ENCODE measurements at regions of chr11 and their contacts with region 1.

Region 1: GRCh38 chr11:96001037-96001436 is 77.1 kb upstream of the MTMR2 start:
- DNase-seq: peak; percentile 51
- H3K4me3 ChIP-seq: no peak overlapping the region
- CTCF ChIP-seq: no peak

Region 2: DNA sequence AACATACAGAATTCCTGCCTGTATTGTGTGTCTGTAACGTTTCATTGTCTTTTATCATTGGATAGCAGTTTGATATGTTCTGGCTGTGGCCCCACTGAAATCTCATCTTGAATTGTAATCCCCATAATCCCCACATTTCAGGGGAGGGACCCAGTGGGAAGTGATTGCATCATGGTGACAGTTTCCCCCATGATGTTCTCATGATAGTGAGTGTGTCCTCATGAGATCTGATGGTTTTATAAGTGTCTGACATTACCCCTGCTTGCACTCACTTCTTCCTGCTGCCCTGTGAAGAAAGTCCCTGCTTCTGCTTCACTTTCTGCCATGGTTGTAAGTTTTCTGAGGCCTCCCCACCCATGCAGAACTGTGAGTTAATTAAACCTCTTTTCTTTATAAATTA is 57.5 kb before region 1 on chr11:
- in situ Hi-C with region 1: no loop called
- DNase-seq: no peak
- H3K4me3 ChIP-seq: no peak overlapping the region
- CTCF ChIP-seq: no peak

Region 3: DNA sequence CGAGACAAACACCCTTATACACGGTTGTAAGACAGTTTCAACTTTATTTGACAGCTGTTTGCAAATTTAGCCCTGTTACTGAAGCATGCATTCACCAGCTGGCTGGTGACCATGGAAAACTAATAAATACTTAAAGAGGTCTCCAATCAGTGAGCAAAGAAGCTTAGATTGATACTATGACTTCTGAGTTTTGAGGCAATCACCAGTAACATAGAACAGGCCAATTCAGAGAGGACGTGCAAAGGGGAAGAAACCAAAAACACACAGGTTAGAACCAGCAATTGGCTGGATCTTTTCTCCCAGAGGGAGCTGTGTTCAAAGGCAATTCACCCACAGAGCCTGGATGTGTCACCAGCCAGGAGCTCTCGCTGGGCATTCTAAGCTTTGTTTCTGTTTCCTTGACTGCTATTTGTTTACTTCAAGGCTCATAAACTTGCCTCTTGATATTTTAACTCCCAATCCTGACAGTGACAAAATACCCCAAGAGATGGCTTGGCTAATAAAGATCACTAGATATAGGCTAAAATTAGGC is 36.4 kb after region 1 on chr11:
- in situ Hi-C with region 1: loop called (anchors 5 kb)
- DNase-seq: peak; percentile 34
- H3K4me3 ChIP-seq: no peak overlapping the region
- CTCF ChIP-seq: peak; percentile 21